Activated B cell treated with CpG ODN at 0.5 μM for 24 hours (primary cell): ENCODE measurements at regions of chr16 and their contacts with region 1.

Region 1: GRCh38 chr16:56888806-56889205 is 23.8 kb downstream of the SLC12A3 start:
- DNase-seq: peak; percentile 55
- ATAC-seq: peak; percentile 91
- H3K4me3 Mint-ChIP-seq: peak overlapping the region; percentile 24
- H3K27ac Mint-ChIP-seq: peak overlapping the region; percentile 68
- H3K4me1 Mint-ChIP-seq: peaks cover 16% of the 10 kb centered on the region
- H3K27me3 Mint-ChIP-seq: no peaks in the 10 kb centered on the region
- CTCF ChIP-seq: no peak

Region 2: DNA sequence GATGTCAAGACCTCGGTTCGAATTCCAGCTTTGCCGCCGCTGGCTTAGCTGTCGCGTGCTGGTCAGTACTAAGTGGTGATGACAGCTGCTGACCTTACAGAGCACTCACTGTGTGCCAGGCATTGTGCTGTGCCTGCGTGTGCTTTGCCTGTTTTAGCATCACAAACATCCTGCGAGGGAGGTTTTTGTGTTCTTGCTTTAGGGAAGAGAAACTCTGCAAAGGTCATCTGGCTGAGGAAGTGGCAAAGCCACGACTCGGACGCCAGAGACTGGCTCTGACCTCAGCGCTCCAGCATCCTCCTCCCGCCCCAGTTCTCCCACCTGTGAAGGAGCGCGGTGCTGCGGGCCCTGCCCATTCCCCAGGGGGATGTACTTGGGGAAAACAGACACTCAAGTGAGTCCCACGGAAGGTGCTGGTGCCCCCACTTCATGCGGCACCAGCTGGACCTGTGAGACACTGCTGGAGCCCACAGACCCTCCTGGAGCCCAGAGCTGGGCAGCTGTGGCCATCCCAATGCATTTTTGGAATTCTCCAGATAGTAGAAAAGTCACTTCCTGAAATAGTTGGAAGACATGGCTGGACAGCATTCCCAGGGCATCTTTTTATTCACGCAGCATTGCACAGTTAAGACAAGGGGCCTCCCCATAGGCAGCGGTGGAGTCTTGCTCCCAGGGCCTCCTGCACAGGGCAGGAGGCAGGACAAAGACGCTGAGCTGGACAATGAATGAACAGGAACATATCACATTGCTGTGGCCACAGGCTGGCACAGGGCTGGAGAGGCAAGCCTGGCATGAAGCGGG is 23.2 kb after region 1 on chr16:
- CTCF ChIA-PET with region 1: interaction called, 4 read pairs
- POLR2A ChIA-PET with region 1: interaction called, 26 read pairs
- intact Hi-C with region 1: loop called (anchors 2 kb)
- DNase-seq: peak; percentile 70
- ATAC-seq: peak; percentile 81
- H3K4me3 Mint-ChIP-seq: peak overlapping the region; percentile 64
- H3K27ac Mint-ChIP-seq: peak overlapping the region; percentile 96
- H3K4me1 Mint-ChIP-seq: peaks cover 79% of the 10 kb centered on the region
- H3K27me3 Mint-ChIP-seq: no peaks in the 10 kb centered on the region
- CTCF ChIP-seq: no peak

Region 3: DNA sequence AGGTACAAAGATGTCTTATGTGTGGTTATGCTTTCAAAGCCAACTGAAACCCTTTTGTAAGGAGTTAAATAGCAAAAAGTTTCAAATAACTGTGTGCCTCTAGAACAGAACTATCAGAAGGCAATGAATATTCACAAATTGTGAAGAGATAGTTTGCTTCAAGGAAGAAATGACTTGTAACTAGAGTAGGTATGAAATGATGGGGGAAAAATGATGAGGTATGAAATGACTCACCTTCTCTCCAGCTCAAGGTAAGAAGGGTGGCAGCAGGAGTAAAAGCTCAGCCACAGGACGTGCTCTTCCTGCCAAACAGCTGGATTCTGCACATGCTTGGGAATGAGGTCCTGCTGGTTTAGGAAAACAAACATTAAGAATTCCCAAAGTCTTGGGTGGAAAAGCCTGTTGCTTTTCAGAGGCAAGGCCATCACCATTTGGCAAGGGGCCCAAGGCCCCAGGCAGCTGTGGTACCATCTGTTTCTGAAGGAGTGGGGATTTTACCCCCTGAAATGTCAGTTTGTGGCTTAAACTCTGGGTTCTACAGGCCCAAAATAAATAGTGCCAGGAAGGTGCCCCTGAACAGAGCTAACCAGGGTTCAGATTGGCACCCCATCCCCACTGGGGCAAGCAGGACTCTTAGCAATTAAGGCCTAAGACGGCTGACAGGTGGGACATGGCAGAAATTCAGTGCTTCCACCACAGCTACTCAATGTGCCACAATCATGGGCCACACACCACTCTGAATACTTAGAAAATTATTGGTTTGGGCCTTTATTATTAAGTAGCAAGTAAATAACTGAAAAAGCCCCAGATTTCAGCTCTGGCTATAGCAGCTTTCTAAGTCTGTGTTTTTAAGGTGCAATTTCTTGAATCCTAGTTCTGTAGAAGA is 56.4 kb after region 1 on chr16:
- CTCF ChIA-PET with region 1: no interaction called
- POLR2A ChIA-PET with region 1: interaction called, 12 read pairs
- intact Hi-C with region 1: no loop called
- DNase-seq: no peak
- ATAC-seq: no peak
- H3K4me3 Mint-ChIP-seq: no peak overlapping the region
- H3K27ac Mint-ChIP-seq: peak overlapping the region; percentile 71
- H3K4me1 Mint-ChIP-seq: peaks cover 69% of the 10 kb centered on the region
- H3K27me3 Mint-ChIP-seq: no peaks in the 10 kb centered on the region
- CTCF ChIP-seq: no peak

Region 4: GRCh38 chr16:57036315-57036714 is 147.5 kb after region 1 on chr16:
- CTCF ChIA-PET with region 1: no interaction called
- POLR2A ChIA-PET with region 1: interaction called, 10 read pairs
- intact Hi-C with region 1: no loop called
- DNase-seq: no peak
- ATAC-seq: no peak
- H3K4me3 Mint-ChIP-seq: no peak overlapping the region
- H3K27ac Mint-ChIP-seq: peak overlapping the region; percentile 92
- H3K4me1 Mint-ChIP-seq: peaks cover 48% of the 10 kb centered on the region
- H3K27me3 Mint-ChIP-seq: no peaks in the 10 kb centered on the region
- CTCF ChIP-seq: no peak